Endothelial cell of umbilical vein (primary cell): ENCODE measurements at regions of chr15 and their contacts with region 1.

Region 1: DNA sequence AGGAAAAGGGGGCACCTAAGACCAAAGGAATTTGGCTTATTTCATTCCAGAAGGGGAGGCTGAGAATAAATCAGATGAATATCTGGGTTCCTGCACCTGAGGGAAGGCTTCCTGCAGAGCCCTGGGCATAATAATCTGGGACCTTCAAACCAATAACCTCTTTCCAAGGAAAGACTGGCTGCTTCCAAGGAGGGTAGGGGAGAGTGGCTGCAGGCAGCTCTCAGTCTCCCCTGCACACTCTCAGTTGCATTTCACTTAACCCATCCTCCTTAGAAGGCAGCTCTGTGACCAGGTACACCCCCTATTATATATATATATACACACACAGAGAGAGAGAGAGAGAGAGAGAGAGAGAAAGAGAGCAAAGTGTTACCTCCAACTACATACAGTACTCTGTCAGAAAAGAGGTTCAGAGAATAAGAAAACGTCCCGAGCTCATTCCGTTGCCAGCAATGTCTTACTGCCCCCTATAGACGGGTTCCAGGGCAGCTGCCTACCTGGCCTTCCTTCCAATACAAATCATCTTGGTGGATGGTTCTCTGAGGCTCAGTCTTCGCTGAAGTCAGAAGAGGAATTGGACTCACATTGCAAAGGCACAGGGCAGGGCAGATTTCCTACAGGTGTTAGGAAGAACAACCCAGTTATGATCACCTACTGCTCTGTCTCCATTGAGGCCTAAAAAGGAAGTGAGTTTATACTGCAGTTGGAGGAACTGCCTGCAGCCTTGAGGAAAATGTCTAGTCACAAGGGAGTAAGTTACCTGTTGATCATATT is 26.1 kb downstream of the CAPN3 start:
- DNase-seq: peak; percentile 59
- H3K4me3 ChIP-seq: no peak overlapping the region
- H3K27ac ChIP-seq: no peak overlapping the region
- H3K4me1 ChIP-seq: peaks cover 11% of the 10 kb centered on the region
- H3K27me3 ChIP-seq: peaks cover 0 to 6% of the 10 kb centered on the region in 2 experiments
- CTCF ChIP-seq: peak; percentile 71 to 79
- POLR2A ChIP-seq: no peak

Region 2: DNA sequence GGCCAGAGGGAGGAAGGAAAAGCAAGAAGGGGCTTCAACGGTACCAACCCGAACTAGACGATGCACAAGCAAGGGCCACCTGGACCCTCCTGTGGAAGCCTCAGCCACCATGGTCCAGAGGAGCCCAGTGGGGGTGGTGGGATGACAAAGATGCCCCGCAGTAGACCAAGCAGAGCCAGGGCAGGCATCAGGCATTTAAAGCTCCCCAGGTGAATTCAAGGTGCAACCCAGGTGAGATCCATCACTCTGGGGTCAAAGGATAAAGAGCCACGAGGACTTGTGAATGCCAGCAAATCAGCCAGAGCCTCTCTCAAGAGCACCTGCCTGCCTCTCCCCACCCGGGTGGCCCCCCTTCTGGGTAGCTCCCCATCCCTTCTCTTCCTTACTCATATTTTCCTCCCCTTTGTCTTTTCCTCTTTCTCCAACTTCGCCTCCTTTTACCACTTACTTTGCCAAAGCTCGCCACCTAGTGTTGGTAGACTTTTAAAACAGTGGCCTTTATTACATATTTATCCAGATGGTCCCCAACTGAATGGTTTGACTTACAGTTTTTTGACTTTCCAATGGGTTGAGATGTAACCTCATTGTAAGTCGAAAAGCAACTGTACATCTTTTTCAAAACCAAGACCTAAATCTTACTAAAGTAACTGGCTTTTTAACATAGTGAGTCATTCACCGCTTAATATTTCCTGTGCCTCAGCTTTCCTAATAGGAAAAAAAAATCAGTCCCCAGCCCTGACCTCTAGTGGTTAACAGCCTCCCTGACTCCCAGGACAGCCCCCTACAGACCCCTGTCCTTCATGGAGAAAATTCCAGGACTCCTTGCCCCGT is 247.7 kb before region 1 on chr15:
- CTCF ChIA-PET with region 1: interaction called, 10 read pairs
- POLR2A ChIA-PET with region 1: no interaction called
- dilution Hi-C with region 1: no loop called
- intact Hi-C with region 1: no loop called
- DNase-seq: peak; percentile 66
- H3K4me3 ChIP-seq: no peak overlapping the region
- H3K27ac ChIP-seq: no peak overlapping the region
- H3K4me1 ChIP-seq: no peaks in the 10 kb centered on the region
- H3K27me3 ChIP-seq: peaks cover 4 to 10% of the 10 kb centered on the region in 2 experiments
- CTCF ChIP-seq: peak; percentile 43 to 52
- POLR2A ChIP-seq: no peak

Region 3: GRCh38 chr15:42220216-42220615 is 165.2 kb before region 1 on chr15:
- CTCF ChIA-PET with region 1: interaction called, 11 read pairs
- POLR2A ChIA-PET with region 1: no interaction called
- dilution Hi-C with region 1: no loop called
- intact Hi-C with region 1: no loop called
- DNase-seq: peak; percentile 54
- H3K4me3 ChIP-seq: no peak overlapping the region
- H3K27ac ChIP-seq: no peak overlapping the region
- H3K4me1 ChIP-seq: no peaks in the 10 kb centered on the region
- H3K27me3 ChIP-seq: no peaks in the 10 kb centered on the region
- CTCF ChIP-seq: no peak
- POLR2A ChIP-seq: no peak

Region 4: DNA sequence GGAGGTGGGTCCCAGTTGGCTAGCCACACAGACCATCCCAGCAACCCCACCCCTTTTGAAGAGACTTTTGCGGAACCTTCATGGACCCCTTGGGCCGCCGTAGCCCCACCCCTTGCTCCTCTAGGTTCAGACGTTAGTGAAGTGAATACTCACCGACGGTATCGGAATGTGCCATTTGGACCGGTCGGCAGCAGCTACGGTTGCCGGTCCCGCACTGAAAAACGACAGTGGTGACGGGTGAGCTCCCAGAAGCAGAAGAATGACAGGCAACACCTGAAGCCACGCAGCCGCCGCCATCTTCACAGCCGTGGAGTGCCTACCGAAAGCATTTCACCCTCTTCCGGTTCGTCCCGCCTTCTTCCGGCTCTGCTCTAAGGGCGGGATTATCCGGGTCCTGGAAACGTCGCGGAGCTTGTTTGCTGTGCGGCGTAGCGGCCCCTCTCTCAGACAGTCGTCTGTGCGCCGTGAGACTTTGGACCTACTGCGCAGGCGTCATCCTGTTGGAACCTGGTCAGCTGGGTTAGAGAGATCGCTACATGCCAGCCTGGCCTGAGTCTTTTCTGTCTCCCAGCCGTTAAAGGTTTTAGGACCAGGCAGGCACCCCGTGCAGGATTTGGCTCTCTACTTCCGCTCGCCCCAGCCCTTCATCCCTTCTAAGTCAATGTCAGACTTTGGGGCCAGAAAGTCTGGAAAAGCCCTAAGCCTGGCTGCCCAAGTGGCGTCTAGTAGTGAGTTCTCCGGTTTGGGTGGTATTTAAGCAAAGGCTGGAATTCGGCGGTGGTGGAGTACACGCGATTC is 112.1 kb before region 1 on chr15 and contains the starts of genes GANC and TMEM87A:
- CTCF ChIA-PET with region 1: interaction called, 16 read pairs
- POLR2A ChIA-PET with region 1: no interaction called
- dilution Hi-C with region 1: no loop called
- intact Hi-C with region 1: loop called (anchors 1 kb)
- DNase-seq: peak; percentile 99
- H3K4me3 ChIP-seq: peak within 1 kb of the TSS; percentile 84 to 97 (median 96)
- H3K27ac ChIP-seq: peak within 1 kb of the TSS; percentile 89
- H3K4me1 ChIP-seq: peaks cover 41% of the 10 kb centered on the region
- H3K27me3 ChIP-seq: no peaks in the 10 kb centered on the region
- CTCF ChIP-seq: no peak
- POLR2A ChIP-seq: peak; percentile 94
- total RNA-seq, gene GANC: 17.8 and 20.0 TPM in 2 replicates
- total RNA-seq, gene TMEM87A: 41.1 and 45.5 TPM in 2 replicates

Region 5: DNA sequence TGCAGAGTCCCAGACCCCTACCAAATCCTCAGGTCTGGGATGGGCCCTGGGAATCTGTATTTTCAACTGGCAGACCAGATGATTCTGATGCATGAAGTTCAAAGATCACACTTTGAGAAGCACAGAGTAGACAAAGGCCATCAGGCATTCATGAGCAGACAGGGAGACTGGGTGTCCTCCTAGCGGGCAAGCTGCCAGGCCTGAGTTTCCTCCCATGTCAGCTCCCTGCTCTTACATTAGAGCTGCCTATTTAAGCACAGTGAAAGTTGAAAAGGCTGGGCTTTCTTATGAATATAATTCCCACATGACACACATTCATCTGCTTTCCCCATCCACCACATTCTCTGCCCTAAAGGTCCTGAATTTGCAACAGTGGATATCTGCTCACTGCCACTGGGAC is 12.1 kb before region 1 on chr15:
- CTCF ChIA-PET with region 1: interaction called, 31 read pairs
- POLR2A ChIA-PET with region 1: no interaction called
- dilution Hi-C with region 1: no loop called
- intact Hi-C with region 1: no loop called
- DNase-seq: no peak
- H3K4me3 ChIP-seq: no peak overlapping the region
- H3K27ac ChIP-seq: no peak overlapping the region
- H3K4me1 ChIP-seq: no peaks in the 10 kb centered on the region
- H3K27me3 ChIP-seq: no peaks in the 10 kb centered on the region
- CTCF ChIP-seq: no peak
- POLR2A ChIP-seq: no peak

Region 6: DNA sequence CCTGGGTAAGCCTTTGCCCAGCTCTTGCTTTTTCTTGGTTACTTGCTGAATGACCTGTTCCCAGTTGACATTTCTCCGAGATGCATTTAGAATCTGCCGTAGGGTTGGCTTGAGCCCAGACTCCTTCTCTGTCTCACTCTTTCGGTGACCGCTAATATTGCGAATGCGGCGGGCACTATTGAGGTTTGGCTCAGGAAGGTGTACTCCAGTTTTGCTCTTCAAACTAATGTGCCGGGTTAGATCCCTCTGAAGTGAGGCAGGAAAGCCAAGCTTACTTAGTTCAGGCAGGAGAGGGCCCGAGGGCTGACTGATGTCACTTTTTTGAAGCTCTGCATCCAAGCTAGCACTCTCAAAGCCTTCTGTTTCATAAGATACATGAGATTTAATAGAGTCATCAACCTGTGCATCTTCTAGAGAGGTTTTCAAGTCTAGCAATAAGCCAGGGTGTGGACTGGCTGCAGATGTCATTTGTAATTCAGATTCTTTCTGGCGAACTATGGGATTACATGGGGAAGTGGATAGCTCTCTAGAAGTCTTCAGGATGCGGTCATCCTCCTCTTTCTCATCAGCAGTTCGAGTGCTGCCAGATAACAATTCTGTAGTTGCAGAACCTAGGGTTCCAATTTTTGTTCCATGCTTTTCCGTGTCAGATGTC is 64.5 kb after region 1 on chr15:
- CTCF ChIA-PET with region 1: no interaction called
- POLR2A ChIA-PET with region 1: no interaction called
- dilution Hi-C with region 1: no loop called
- intact Hi-C with region 1: no loop called
- DNase-seq: no peak
- H3K4me3 ChIP-seq: no peak overlapping the region
- H3K27ac ChIP-seq: no peak overlapping the region
- H3K4me1 ChIP-seq: no peaks in the 10 kb centered on the region
- H3K27me3 ChIP-seq: no peaks in the 10 kb centered on the region
- CTCF ChIP-seq: no peak
- POLR2A ChIP-seq: no peak